Activated CD4-positive, alpha-beta T cell treated with anti-CD3 and anti-CD28 coated beads, Interleukin-2, amount 10 ng/mL, durations not matched to agents 24 days and 14 days (primary cell): ENCODE measurements at regions of chr13 and their contacts with region 1.

Region 1: DNA sequence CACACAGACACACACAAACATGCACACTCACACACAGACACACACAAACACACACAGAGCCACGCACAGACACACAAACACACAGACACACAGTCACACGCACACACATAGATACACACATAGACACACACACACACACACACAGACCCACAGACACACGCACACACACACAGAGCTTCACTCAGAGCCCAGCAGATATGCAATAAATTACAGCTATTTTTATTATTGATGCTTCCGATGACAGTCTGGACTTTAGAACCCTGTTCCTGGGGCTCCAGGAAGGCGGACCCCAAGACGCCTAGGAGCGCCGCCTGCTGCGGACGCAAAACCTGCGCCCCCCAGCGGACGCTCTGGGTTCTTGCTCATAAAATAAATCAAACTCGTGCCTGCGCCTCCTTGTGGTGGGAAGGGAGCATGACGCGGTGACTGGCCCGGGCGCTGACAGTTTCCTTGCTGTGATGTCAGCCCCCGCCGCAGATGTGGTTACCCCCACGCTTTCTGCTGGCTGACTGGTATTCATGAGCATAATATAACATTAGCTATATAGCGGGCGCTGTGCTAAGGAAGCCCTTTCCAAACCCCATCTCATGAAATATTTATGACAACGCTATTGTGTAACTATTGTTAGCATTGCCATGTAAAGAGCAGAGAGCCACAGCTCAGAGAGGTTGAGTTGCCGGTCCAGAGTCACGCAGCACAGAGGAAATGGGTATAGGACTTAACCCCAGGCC is 64.4 kb upstream of the TM9SF2 start:
- DNase-seq: peak; percentile 98
- H3K4me3 Mint-ChIP-seq: peak overlapping the region; percentile 5
- H3K27ac Mint-ChIP-seq: peak overlapping the region; percentile 17
- H3K4me1 Mint-ChIP-seq: peaks cover 58% of the 10 kb centered on the region
- H3K27me3 Mint-ChIP-seq: peaks cover 31% of the 10 kb centered on the region

Region 2: DNA sequence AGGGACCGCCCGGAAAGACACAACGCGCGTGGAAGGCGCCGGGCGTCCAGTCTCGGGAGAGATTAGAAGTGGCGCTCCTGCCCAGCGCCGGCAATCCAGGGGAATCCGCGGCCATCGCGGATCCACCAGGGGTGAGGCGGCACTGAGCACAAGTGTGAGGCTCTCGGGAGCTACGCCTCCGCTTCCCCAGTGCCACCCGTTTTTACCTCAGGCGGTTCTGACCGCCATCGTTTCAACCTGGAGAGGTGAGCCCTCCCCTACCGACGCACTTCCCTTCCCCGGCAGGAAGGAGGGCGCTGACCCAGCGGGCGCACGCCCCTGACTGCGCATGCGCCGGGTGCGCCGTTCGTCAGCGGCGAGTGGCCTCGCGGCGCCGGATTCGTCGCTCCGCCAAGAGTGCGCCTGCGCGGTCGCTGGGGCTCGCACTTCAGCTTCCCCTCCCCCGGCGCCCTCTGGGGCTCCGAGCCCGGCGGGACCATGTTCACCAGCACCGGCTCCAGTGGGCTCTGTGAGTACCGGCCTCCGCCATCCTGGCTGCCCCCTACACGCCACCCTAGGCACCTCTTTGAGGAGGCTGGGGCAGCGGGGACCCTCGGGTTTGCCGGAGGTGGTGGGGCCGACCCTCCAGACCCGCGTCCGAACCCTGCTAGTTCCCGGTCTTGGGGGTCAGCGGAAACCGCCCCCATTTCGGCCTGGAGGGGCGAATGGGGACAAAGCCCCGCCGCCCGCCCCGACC is 236.3 kb before region 1 on chr13 and contains the start of gene UBAC2:
- intact Hi-C with region 1: loop called (anchors 1 kb)
- DNase-seq: peak; percentile 99
- H3K4me3 Mint-ChIP-seq: peak within 1 kb of the TSS; percentile 97
- H3K27ac Mint-ChIP-seq: peak within 1 kb of the TSS; percentile 97
- H3K4me1 Mint-ChIP-seq: peaks cover 46% of the 10 kb centered on the region
- H3K27me3 Mint-ChIP-seq: no peaks in the 10 kb centered on the region
- total RNA-seq, gene UBAC2: 52.6 and 52.8 TPM in 2 replicates

Region 3: GRCh38 chr13:99296398-99296797 is 140.5 kb before region 1 on chr13:
- intact Hi-C with region 1: loop called (anchors 2 kb)
- DNase-seq: no peak
- H3K4me3 Mint-ChIP-seq: peak overlapping the region; percentile 68
- H3K27ac Mint-ChIP-seq: peak overlapping the region; percentile 79
- H3K4me1 Mint-ChIP-seq: peaks cover 58% of the 10 kb centered on the region
- H3K27me3 Mint-ChIP-seq: no peaks in the 10 kb centered on the region

Region 4: GRCh38 chr13:99322297-99323103 is 114.4 kb before region 1 on chr13:
- intact Hi-C with region 1: loop called (anchors 1 kb)
- DNase-seq: peak; percentile 81
- H3K4me3 Mint-ChIP-seq: peak overlapping the region; percentile 63
- H3K27ac Mint-ChIP-seq: peak overlapping the region; percentile 98
- H3K4me1 Mint-ChIP-seq: peaks cover 59% of the 10 kb centered on the region
- H3K27me3 Mint-ChIP-seq: no peaks in the 10 kb centered on the region

Region 5: GRCh38 chr13:99417201-99418102 is 19.4 kb before region 1 on chr13:
- intact Hi-C with region 1: loop called (anchors 1 kb)
- DNase-seq: no peak
- H3K4me3 Mint-ChIP-seq: peak overlapping the region; percentile 28
- H3K27ac Mint-ChIP-seq: no peak overlapping the region
- H3K4me1 Mint-ChIP-seq: peaks cover 50% of the 10 kb centered on the region
- H3K27me3 Mint-ChIP-seq: peaks cover 2% of the 10 kb centered on the region

Region 6: GRCh38 chr13:99606324-99607066 is 169.6 kb after region 1 on chr13:
- intact Hi-C with region 1: loop called (anchors 2 kb)
- DNase-seq: peak; percentile 96
- H3K4me3 Mint-ChIP-seq: peak within 1 kb of the TSS; percentile 87
- H3K27ac Mint-ChIP-seq: peak within 1 kb of the TSS; percentile 86
- H3K4me1 Mint-ChIP-seq: peaks cover 18% of the 10 kb centered on the region
- H3K27me3 Mint-ChIP-seq: no peaks in the 10 kb centered on the region